ENCODE measurements at regions of chr3 and their contacts with region 1.

Region 1: DNA sequence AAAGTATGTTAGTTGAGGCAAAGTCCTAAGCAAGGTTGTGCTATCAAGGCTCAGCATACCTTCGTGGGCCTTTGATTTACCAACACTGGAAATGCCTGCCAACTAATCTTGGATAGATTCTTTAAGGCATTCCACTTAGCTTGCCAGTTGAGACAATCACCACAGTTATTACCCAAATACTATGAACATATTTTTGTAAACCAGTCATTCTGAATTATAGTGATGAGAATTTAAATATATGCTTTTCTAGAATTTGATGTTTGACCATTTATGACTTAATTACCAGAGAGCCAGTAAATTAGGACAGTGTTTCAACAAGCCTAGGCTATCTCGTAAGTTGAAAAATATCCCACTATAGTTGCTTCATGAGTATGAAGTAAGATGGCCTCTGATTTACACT is 15.5 kb downstream of the TRIM59 start:
- DNase-seq: no peak
- H3K4me3 ChIP-seq: no peak overlapping the region
- H3K27ac ChIP-seq: no peak overlapping the region
- H3K4me1 ChIP-seq: peaks cover 0 to 2% (median 0%) of the 10 kb centered on the region in 4 experiments; a peak in 2 of 7 replicates
- H3K27me3 ChIP-seq: no peaks in the 10 kb centered on the region
- CTCF ChIP-seq: no peak
- EP300 ChIP-seq: no peak
- POLR2A ChIP-seq: no peak
- RAD21 ChIP-seq: no peak

Region 2: GRCh38 chr3:160265073-160265472 is 169.0 kb before region 1 on chr3:
- CTCF ChIA-PET with region 1: no interaction called
- POLR2A ChIA-PET with region 1: no interaction called
- DNase-seq: no peak
- H3K4me3 ChIP-seq: no peak overlapping the region
- H3K27ac ChIP-seq: no peak overlapping the region
- H3K4me1 ChIP-seq: no peaks in the 10 kb centered on the region
- H3K27me3 ChIP-seq: no peaks in the 10 kb centered on the region
- CTCF ChIP-seq: no peak
- EP300 ChIP-seq: no peak
- POLR2A ChIP-seq: no peak
- RAD21 ChIP-seq: no peak

Region 3: GRCh38 chr3:160444413-160444812 is 10.3 kb after region 1 on chr3:
- CTCF ChIA-PET with region 1: interaction called, 4 read pairs
- POLR2A ChIA-PET with region 1: interaction called, 70 read pairs
- DNase-seq: no peak
- H3K4me3 ChIP-seq: no peak overlapping the region
- H3K27ac ChIP-seq: no peak overlapping the region
- H3K4me1 ChIP-seq: peaks cover 0 to 5% (median 1%) of the 10 kb centered on the region in 4 experiments; a peak in 3 of 7 replicates
- H3K27me3 ChIP-seq: no peaks in the 10 kb centered on the region
- CTCF ChIP-seq: no peak
- EP300 ChIP-seq: no peak
- POLR2A ChIP-seq: no peak
- RAD21 ChIP-seq: no peak